IMR-90 (cell line): ENCODE measurements at regions of chr10 and their contacts with region 1.

Region 1: DNA sequence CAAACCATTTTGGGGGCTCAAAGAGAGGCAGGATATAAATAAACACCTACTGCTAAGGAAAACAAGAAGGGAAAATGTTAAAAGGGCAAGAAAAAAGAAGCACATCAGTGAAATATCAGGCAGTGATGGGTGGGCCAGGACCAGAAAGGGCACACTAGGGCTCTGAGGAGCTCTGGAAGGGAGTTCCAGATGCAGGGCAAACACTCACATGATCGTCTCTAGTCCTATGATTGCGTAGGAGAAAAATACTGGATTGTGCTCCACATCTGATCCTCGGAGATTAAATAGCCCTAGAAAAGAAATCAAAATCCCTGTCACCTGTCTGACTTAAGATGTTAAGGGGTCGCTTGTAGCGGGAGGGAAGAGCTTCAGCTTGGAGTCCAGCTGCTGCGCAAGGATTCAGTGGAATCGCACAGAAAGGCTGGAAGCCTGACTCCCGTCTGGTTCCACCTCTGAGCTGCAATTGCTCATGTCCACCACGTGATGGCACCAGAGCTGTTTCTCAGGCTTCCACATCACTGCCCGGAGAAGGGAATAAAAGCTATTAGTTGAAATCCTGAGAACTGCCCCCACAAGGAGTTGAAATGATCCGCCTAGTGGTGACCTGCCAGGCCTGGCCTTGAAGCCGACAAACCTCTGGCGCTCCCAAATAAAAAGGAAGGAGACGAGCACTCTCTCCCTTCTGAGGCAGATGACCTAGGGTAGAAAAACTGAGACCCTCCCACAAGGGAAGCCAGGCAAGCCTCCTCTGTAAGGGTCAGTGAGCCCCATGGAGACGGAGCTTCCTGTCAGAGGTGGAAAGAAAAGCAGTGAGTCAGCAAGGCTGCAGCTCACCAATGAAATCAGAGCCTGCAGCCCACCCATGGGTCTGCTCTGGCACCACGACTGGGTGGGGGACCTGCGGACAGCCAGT is 39.2 kb downstream of the XPNPEP1 start:
- DNase-seq: peak; percentile 90
- ATAC-seq: peak; percentile 95
- H3K4me3 ChIP-seq: no peak overlapping the region
- H3K27ac ChIP-seq: peak overlapping the region; percentile 62
- H3K4me1 ChIP-seq: peaks cover 15% of the 10 kb centered on the region
- H3K27me3 ChIP-seq: no peaks in the 10 kb centered on the region
- CTCF ChIP-seq: peak; percentile 99
- POLR2A ChIP-seq: peak; percentile 59; the same call in 1 of the 2 replicates
- RAD21 ChIP-seq: peak; percentile 99

Region 2: GRCh38 chr10:109902934-109903589 is 18.9 kb after region 1 on chr10:
- CTCF ChIA-PET with region 1: interaction called, 11 read pairs
- POLR2A ChIA-PET with region 1: no interaction called
- dilution Hi-C with region 1: no loop called
- in situ Hi-C with region 1: no loop called
- intact Hi-C with region 1: no loop called
- DNase-seq: peak; percentile 38
- ATAC-seq: peak; percentile 65
- H3K4me3 ChIP-seq: no peak overlapping the region
- H3K27ac ChIP-seq: peak overlapping the region; percentile 68
- H3K4me1 ChIP-seq: peaks cover 32% of the 10 kb centered on the region
- H3K27me3 ChIP-seq: no peaks in the 10 kb centered on the region
- CTCF ChIP-seq: no peak
- POLR2A ChIP-seq: no peak
- RAD21 ChIP-seq: no peak

Region 3: DNA sequence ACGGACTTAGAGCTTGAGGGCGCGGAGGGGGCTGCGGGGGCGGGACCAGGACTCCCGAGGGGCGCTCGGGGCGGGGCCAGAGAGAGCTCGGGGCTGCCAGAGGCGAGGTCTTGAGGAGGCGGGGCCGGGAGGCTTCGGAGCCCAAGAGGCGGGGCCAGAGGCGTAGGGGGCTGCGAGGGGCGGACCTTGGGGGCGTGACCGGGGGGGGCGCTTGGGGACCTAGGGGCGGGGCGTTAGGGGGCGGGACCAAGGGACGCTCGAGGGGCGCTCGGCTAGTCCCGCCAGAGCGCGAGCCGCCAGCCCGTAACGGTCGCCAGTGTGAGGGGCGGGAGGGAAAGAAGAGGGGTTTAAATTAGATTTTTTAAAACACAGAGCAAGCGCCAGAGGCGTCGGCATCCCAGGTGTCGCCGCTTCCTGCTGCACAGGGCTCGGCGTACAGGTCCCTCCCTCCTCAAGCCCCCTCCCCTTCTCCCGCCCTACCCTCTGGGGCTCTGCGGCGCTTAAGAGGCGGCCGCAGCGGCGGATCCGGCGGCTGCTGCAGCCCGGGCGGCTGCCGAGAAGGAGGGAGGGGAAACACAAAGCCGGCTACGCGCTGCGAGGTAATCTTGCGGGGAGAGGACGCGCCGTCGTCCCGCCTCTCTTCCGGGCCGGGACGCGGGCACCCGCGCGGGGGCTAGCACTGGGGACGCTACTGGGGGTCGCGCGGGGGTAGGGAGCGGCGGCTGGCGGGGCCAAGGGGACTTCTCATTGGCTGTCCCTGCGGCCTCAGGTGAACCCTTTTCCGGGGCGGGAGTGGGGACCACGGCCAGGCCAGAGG is 123.8 kb after region 1 on chr10 and contains the start of gene ADD3:
- CTCF ChIA-PET with region 1: interaction called, 8 read pairs
- POLR2A ChIA-PET with region 1: no interaction called
- dilution Hi-C with region 1: no loop called
- in situ Hi-C with region 1: no loop called
- intact Hi-C with region 1: loop called (anchors 1 kb)
- DNase-seq: peak; percentile 91
- ATAC-seq: peak; percentile 92
- H3K4me3 ChIP-seq: peak within 1 kb of the TSS; percentile 82
- H3K27ac ChIP-seq: peak within 1 kb of the TSS; percentile 86
- H3K4me1 ChIP-seq: peaks cover 4% of the 10 kb centered on the region; the same call in 1 of the 2 replicates
- H3K27me3 ChIP-seq: no peaks in the 10 kb centered on the region
- CTCF ChIP-seq: no peak
- POLR2A ChIP-seq: peak; percentile 58; the same call in 1 of the 2 replicates
- RAD21 ChIP-seq: no peak
- total RNA-seq, gene ADD3: 137 and 212 TPM in 2 replicates

Region 4: GRCh38 chr10:110137142-110137545 is 253.0 kb after region 1 on chr10:
- CTCF ChIA-PET with region 1: interaction called, 10 read pairs
- POLR2A ChIA-PET with region 1: no interaction called
- dilution Hi-C with region 1: no loop called
- in situ Hi-C with region 1: loop called (anchors 5 kb)
- intact Hi-C with region 1: loop called (anchors 1 kb)
- DNase-seq: peak; percentile 78
- ATAC-seq: peak; percentile 82
- H3K4me3 ChIP-seq: no peak overlapping the region
- H3K27ac ChIP-seq: no peak overlapping the region
- H3K4me1 ChIP-seq: 0 out of 2 replicates have a peak, but pooled peaks cover 2% of the 10 kb centered on the region
- H3K27me3 ChIP-seq: no peaks in the 10 kb centered on the region
- CTCF ChIP-seq: peak; percentile 89
- POLR2A ChIP-seq: no peak
- RAD21 ChIP-seq: peak; percentile 88

Region 5: GRCh38 chr10:110273474-110273873 is 389.4 kb after region 1 on chr10:
- CTCF ChIA-PET with region 1: interaction called, 6 read pairs
- POLR2A ChIA-PET with region 1: no interaction called
- dilution Hi-C with region 1: no loop called
- in situ Hi-C with region 1: loop called (anchors 5 kb)
- intact Hi-C with region 1: no loop called
- DNase-seq: peak; percentile 90
- ATAC-seq: peak; percentile 72
- H3K4me3 ChIP-seq: no peak overlapping the region
- H3K27ac ChIP-seq: no peak overlapping the region
- H3K4me1 ChIP-seq: no peaks in the 10 kb centered on the region; the same call in 1 of the 2 replicates
- H3K27me3 ChIP-seq: no peaks in the 10 kb centered on the region
- CTCF ChIP-seq: no peak
- POLR2A ChIP-seq: no peak
- RAD21 ChIP-seq: no peak